ENCODE measurements at regions of chr19 and their contacts with region 1.

Region 1: GRCh38 chr19:32405431-32406161 is at the start of gene DPY19L3:
- DNase-seq: peak; percentile 84
- H3K4me3 ChIP-seq: peak within 1 kb of the TSS; percentile 83
- H3K27ac ChIP-seq: peak within 1 kb of the TSS; percentile 77
- H3K27me3 ChIP-seq: no peaks in the 10 kb centered on the region
- CTCF ChIP-seq: no peak
- polyA plus RNA-seq, gene DPY19L3: 38.4 and 39.2 TPM in 2 replicates

Region 2: GRCh38 chr19:32345261-32346207 is 60.1 kb before region 1 on chr19 and contains the start of gene ZNF507:
- CTCF ChIA-PET with region 1: interaction called, 3 read pairs
- POLR2A ChIA-PET with region 1: interaction called, 16 read pairs
- DNase-seq: no peak
- H3K4me3 ChIP-seq: peak within 1 kb of the TSS; percentile 80
- H3K27ac ChIP-seq: no peak within 1 kb of the TSS
- H3K27me3 ChIP-seq: no peaks in the 10 kb centered on the region
- CTCF ChIP-seq: peak; percentile 11; the same call in 1 of the 2 replicates
- polyA plus RNA-seq, gene ZNF507: 15.9 and 20.3 TPM in 2 replicates

Region 3: GRCh38 chr19:32373585-32374295 is 31.9 kb before region 1 on chr19:
- CTCF ChIA-PET with region 1: no interaction called
- POLR2A ChIA-PET with region 1: interaction called, 45 read pairs
- DNase-seq: peak; percentile 97
- H3K4me3 ChIP-seq: peak overlapping the region; percentile 24
- H3K27ac ChIP-seq: peak overlapping the region; percentile 85
- H3K27me3 ChIP-seq: no peaks in the 10 kb centered on the region
- CTCF ChIP-seq: no peak

Region 4: GRCh38 chr19:32427536-32427935 is 21.9 kb after region 1 on chr19:
- CTCF ChIA-PET with region 1: no interaction called
- POLR2A ChIA-PET with region 1: interaction called, 10 read pairs
- DNase-seq: no peak
- H3K4me3 ChIP-seq: no peak overlapping the region
- H3K27ac ChIP-seq: no peak overlapping the region
- H3K27me3 ChIP-seq: no peaks in the 10 kb centered on the region
- CTCF ChIP-seq: no peak

Region 5: GRCh38 chr19:32453736-32454135 is 48.1 kb after region 1 on chr19:
- CTCF ChIA-PET with region 1: no interaction called
- POLR2A ChIA-PET with region 1: interaction called, 10 read pairs
- DNase-seq: no peak
- H3K4me3 ChIP-seq: no peak overlapping the region
- H3K27ac ChIP-seq: no peak overlapping the region
- H3K27me3 ChIP-seq: no peaks in the 10 kb centered on the region
- CTCF ChIP-seq: no peak

Region 6: GRCh38 chr19:33316541-33317264 is 911.1 kb after region 1 on chr19:
- CTCF ChIA-PET with region 1: no interaction called
- POLR2A ChIA-PET with region 1: no interaction called
- DNase-seq: no peak
- H3K4me3 ChIP-seq: no peak overlapping the region
- H3K27ac ChIP-seq: no peak overlapping the region
- H3K27me3 ChIP-seq: peaks cover 6% of the 10 kb centered on the region
- CTCF ChIP-seq: no peak